Esophagus muscularis mucosa (tissue), 4 donors: ENCODE measurements at regions of chr3 and their contacts with region 1.

Region 1: GRCh38 chr3:73100741-73101559 is 39.5 kb downstream of the EBLN2 start:
- DNase-seq: peak; percentile 94
- H3K4me3 ChIP-seq: no peak overlapping the region
- H3K27ac ChIP-seq: no peak overlapping the region
- H3K4me1 ChIP-seq: peaks cover 0 to 5% (median 0%) of the 10 kb centered on the region in 4 donors
- H3K27me3 ChIP-seq: no peaks in the 10 kb centered on the region
- CTCF ChIP-seq: peak; percentile 90 to 99 (median 95)
- EP300 ChIP-seq: no peak
- POLR2A ChIP-seq: no peak

Region 2: GRCh38 chr3:72977060-72977808 is 123.7 kb before region 1 on chr3:
- intact Hi-C with region 1: no loop called
- DNase-seq: no peak
- H3K4me3 ChIP-seq: no peak overlapping the region
- H3K27ac ChIP-seq: no peak overlapping the region
- H3K4me1 ChIP-seq: no peaks in the 10 kb centered on the region
- H3K27me3 ChIP-seq: no peaks in the 10 kb centered on the region
- CTCF ChIP-seq: peak in 1 of 3 experiments; percentile 11
- EP300 ChIP-seq: no peak
- POLR2A ChIP-seq: no peak

Region 3: GRCh38 chr3:73432023-73432705 is 331.2 kb after region 1 on chr3:
- intact Hi-C with region 1: loop called (anchors 5 kb)
- DNase-seq: no peak
- H3K4me3 ChIP-seq: peak overlapping the region; percentile 8 to 36 (median 13)
- H3K27ac ChIP-seq: peak overlapping the region; percentile 7 to 42 (median 24)
- H3K4me1 ChIP-seq: peaks cover 45 to 91% (median 78%) of the 10 kb centered on the region in 4 donors
- H3K27me3 ChIP-seq: no peaks in the 10 kb centered on the region
- CTCF ChIP-seq: peak; percentile 66 to 71 (median 69)
- EP300 ChIP-seq: no peak
- POLR2A ChIP-seq: no peak

Region 4: DNA sequence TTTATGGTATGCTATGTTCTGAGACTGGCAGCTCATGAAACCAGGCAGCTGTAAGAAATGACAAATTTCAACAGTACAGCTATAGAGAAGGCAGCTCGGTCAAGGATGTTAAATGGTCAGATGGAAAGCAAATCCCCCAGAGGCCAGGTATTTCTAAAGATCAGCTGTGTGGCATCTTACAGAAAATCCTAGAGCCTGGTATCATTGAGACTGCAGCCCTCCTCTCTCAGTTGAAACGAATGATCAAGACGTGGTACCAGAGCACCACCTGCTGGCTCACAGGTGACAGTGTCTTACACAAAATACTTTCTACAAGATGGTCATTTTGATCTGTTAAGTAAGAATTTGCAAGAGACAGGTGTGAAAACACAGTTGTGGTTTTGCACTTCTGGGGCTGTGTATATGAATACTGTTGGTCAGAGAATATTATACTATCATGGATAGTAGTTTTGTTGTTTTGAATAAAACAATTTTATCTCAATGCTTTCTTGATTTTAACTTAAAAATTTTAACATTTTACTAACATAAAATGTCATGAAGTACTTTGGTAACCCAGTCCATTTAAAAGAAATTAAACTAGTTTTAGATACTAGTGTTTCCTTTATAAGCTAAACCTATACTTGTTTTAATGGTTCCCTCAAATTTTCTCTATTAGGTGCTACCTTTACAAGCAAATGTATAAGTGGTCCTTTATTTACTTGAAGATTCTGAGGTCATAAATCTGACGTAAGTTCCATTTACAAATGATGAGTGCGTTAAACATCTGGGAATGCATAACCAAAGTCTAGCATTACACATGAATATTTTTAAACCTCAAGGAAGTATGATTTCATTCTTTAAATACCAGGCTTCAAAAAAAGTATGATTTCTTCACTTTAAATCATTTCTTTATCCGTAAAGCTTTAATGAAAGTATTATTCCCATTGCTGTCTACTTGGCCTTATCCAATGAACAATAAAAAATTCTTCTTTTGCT is 401.9 kb after region 1 on chr3:
- intact Hi-C with region 1: loop called (anchors 2 kb)
- DNase-seq: peak; percentile 91
- H3K4me3 ChIP-seq: peak overlapping the region in 1 of 4 donors; percentile 32
- H3K27ac ChIP-seq: peak overlapping the region; percentile 38 to 72 (median 66)
- H3K4me1 ChIP-seq: peaks cover 42 to 94% (median 80%) of the 10 kb centered on the region in 4 donors
- H3K27me3 ChIP-seq: no peaks in the 10 kb centered on the region
- CTCF ChIP-seq: peak; percentile 78 to 84 (median 83)
- EP300 ChIP-seq: no peak
- POLR2A ChIP-seq: no peak

Region 5: DNA sequence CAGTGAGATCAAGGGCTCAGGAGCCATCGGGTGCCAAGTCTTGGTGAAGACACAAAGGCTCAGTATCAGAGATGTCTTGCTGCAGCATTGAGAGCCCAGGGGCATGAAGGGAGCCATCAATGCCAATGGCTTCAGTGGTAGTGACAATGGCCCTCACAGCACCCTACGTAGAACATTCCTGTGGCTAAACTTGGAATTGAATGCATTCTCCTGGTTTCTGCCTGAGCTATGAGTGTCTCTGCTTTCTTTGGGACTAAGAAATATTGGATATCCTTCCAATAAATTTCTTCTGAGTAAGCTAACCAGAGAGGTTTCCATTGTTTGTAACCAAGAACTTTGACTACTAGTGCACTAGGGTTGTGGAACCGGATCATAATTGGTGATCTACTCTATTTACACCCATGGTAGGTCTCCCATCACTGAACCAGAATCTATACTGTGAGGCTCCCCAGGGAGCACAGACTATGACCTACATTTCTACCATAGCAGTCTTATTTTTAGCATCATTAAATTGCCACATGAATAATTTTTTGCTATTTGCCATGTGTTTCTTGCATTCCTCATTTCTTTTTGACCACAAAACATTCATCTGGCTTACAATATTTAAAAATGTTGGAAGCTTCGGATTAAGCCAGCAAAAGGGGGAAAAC is 555.4 kb after region 1 on chr3:
- intact Hi-C with region 1: loop called (anchors 10 kb)
- DNase-seq: no peak
- H3K4me3 ChIP-seq: no peak overlapping the region
- H3K27ac ChIP-seq: no peak overlapping the region
- H3K4me1 ChIP-seq: no peaks in the 10 kb centered on the region
- H3K27me3 ChIP-seq: no peaks in the 10 kb centered on the region
- CTCF ChIP-seq: no peak
- EP300 ChIP-seq: no peak
- POLR2A ChIP-seq: no peak

Region 6: DNA sequence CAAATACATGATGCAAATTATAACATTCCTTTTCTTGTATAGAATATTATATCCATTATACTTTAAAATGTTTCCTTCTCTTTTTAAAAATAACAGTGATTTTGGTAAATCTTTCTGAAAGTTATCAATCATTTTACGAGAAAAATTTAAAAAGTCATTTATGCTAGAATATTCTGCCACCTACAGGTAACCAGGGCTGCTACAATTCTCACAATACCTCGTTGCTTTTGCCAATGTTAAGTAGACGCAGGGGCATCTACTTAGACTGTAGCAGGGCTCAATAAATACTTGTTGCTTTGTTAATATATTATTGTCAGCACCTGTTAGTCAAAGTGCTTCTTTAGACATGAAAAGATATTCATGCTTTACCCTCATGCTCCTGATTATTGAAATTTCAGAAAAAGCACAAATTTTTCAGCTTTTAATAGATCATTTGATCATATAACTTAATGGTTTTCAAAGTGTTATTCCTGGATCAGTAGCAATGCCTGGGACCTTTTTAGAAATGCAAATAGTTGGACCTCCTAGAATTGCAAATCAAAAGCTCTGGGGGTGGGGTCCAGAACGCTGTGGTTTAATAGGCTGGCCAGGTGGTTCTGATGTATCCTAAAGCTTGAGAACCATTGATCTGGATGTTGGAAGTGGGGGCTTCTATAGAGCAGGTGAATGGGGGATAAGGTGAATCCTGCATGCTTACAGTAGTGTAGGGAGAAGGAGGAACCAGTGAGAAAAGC is 747.4 kb after region 1 on chr3:
- intact Hi-C with region 1: loop called (anchors 5 kb)
- DNase-seq: no peak
- H3K4me3 ChIP-seq: no peak overlapping the region
- H3K27ac ChIP-seq: no peak overlapping the region
- H3K4me1 ChIP-seq: no peaks in the 10 kb centered on the region
- H3K27me3 ChIP-seq: no peaks in the 10 kb centered on the region
- CTCF ChIP-seq: peak; percentile 72 to 77 (median 72)
- EP300 ChIP-seq: no peak
- POLR2A ChIP-seq: no peak